Activated CD8-positive, alpha-beta T cell treated with anti-CD3 and anti-CD28 coated beads, Interleukin-2, amount 10 ng/mL, durations not matched to agents 7 days and 5 days (primary cell): ENCODE measurements at regions of chr6 and their contacts with region 1.

Region 1: GRCh38 chr6:85482905-85483700 is 33.2 kb downstream of the NT5E start:
- DNase-seq: peak; percentile 89
- ATAC-seq: peak; percentile 92
- H3K4me3 Mint-ChIP-seq: no peak overlapping the region
- H3K27ac Mint-ChIP-seq: no peak overlapping the region
- H3K4me1 Mint-ChIP-seq: peaks cover 18% of the 10 kb centered on the region
- H3K27me3 Mint-ChIP-seq: no peaks in the 10 kb centered on the region

Region 2: DNA sequence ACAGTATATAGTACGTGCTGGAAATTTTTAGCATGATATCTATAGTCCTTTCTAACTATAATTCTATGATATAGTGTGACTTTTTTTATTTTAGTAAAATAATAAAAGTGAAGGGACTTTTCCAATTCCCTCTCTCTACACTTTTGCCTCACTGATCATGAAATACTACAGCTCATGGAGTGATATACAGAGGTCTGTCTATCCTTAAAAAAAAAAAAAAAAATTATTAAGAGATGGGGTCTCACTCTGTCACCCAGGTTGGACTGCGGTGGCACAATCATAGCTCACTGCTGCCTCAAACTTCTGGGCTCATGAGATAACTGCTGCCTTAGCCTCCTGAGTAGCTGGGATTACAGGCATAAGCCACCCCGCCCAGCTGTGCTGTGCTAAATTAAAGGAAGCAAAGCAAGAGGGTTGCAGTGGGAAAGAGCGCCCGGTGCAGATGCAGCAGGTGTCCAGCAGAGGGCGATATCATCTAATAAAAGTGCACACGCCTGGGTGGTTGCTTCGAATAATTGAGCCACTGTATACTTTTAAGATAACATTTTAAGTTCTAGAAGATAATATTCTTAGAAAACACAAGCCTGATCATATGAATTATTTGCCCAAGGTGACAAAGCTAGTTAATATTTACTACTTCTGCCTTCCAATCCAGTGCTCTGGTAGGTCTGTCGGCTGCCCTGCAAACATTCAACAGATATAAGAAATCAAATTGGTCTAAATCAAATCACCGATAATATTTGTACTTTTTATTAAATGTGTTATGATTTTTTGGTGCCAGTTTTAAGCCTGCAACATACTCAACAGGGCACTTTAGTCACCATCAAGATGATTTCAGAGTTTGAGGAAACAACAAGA is 128.1 kb before region 1 on chr6:
- CTCF ChIA-PET with region 1: interaction called, 120 read pairs
- POLR2A ChIA-PET with region 1: no interaction called
- DNase-seq: peak; percentile 77
- ATAC-seq: peak; percentile 87
- H3K4me3 Mint-ChIP-seq: no peak overlapping the region
- H3K27ac Mint-ChIP-seq: no peak overlapping the region
- H3K4me1 Mint-ChIP-seq: no peaks in the 10 kb centered on the region
- H3K27me3 Mint-ChIP-seq: peaks cover 4% of the 10 kb centered on the region

Region 3: DNA sequence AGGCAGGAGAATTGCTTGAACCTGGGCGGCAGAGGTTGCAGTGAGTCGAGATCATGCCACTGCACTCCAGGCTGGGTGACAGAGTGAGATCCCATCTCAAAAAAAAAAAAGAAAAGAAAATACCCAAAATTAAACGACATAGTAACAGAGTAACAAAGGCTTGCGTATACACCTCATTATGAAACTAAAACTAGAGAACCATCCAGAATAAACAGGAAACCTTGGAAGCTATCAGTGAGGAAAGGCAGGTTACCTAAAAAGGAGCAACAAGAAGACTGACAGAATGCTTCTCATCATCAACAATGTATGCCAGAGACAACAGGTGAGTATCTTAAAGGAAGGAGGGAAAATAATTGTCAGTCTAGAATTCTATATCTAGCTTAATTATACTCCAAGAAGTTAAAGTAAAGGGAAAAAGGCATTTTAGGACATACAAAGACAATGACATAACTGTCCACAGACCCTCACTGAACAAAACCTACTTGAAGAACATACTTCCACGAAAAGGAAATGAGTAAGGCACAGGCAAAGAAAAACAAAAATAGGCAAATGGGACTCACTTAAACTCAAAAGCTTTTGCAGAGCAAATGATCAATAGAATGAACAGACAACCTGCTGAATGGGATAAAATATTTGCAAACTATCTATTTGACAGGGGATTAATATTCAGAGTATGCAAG is 97.3 kb before region 1 on chr6:
- CTCF ChIA-PET with region 1: interaction called, 14 read pairs
- POLR2A ChIA-PET with region 1: no interaction called
- DNase-seq: no peak
- ATAC-seq: no peak
- H3K4me3 Mint-ChIP-seq: no peak overlapping the region
- H3K27ac Mint-ChIP-seq: no peak overlapping the region
- H3K4me1 Mint-ChIP-seq: peaks cover 3% of the 10 kb centered on the region
- H3K27me3 Mint-ChIP-seq: no peaks in the 10 kb centered on the region

Region 4: DNA sequence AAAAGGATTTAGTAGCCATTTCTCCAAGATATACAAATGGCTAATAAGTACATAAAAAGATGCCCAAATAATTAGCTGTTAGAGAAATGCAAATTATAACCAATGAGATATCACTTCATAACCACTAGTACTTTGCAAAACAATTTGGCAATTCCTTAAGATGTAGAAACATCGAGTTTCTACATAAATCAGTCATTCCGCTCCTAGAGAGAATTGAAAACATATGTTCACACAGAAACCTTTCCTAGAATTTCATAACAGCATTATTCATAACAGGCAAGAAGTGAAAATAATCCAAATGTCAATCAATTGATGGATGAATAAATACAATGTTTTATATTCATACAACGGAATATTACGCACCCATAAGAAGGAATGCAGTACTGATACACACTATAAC is 53.8 kb before region 1 on chr6:
- CTCF ChIA-PET with region 1: interaction called, 10 read pairs
- POLR2A ChIA-PET with region 1: no interaction called
- DNase-seq: no peak
- ATAC-seq: no peak
- H3K4me3 Mint-ChIP-seq: no peak overlapping the region
- H3K27ac Mint-ChIP-seq: no peak overlapping the region
- H3K4me1 Mint-ChIP-seq: no peaks in the 10 kb centered on the region
- H3K27me3 Mint-ChIP-seq: no peaks in the 10 kb centered on the region

Region 5: DNA sequence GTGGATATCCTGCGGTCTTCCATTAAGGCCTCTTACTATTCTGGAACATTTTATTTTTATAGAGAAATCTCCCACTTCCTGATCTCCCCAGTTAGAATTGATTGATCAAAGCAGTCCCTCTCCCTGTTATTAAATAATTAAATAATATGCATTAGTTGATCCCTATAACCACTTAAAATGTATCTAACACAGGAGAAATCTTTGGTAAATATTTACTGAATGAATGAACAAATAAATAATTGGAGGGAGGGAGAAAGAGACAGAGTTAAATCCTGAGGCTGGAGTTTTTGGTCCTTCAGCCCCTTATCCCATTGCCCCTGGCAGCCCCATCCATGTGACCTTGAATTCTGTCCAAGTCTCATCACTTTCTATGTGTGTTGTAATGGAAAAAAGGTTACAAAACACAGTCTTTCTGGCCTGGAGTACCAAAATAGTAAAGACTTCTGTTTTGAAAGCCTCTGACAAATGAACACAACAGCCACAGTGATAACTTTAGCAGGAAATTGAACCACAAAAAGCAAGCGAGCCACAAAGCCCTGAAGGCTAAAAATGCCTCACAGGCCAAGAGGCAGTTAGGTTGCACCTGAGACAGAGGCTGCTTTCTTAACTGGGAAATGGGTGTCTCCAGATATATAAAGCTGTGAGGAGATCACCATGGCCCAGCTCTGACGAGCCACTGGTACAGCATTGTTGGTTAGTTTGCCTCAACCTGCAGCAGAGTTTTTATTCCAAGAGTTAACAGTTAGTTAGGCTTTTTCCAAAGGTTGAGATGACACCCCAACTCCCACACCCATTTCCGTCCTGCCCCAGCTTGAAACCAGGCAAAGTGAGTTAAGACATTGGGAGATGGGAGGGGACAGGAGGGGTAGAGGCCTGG is 21.9 kb before region 1 on chr6:
- CTCF ChIA-PET with region 1: interaction called, 158 read pairs
- POLR2A ChIA-PET with region 1: interaction called, 3 read pairs
- DNase-seq: peak; percentile 83
- ATAC-seq: peak; percentile 73
- H3K4me3 Mint-ChIP-seq: peak overlapping the region; percentile 49
- H3K27ac Mint-ChIP-seq: peak overlapping the region; percentile 85
- H3K4me1 Mint-ChIP-seq: peaks cover 96% of the 10 kb centered on the region
- H3K27me3 Mint-ChIP-seq: no peaks in the 10 kb centered on the region

Region 6: GRCh38 chr6:85506441-85507093 is 23.5 kb after region 1 on chr6:
- CTCF ChIA-PET with region 1: interaction called, 19 read pairs
- POLR2A ChIA-PET with region 1: no interaction called
- DNase-seq: no peak
- ATAC-seq: no peak
- H3K4me3 Mint-ChIP-seq: no peak overlapping the region
- H3K27ac Mint-ChIP-seq: peak overlapping the region; percentile 20
- H3K4me1 Mint-ChIP-seq: peaks cover 4% of the 10 kb centered on the region
- H3K27me3 Mint-ChIP-seq: no peaks in the 10 kb centered on the region